OCI-LY7 (cell line): ENCODE measurements at regions of chr17 and their contacts with region 1.

Region 1: DNA sequence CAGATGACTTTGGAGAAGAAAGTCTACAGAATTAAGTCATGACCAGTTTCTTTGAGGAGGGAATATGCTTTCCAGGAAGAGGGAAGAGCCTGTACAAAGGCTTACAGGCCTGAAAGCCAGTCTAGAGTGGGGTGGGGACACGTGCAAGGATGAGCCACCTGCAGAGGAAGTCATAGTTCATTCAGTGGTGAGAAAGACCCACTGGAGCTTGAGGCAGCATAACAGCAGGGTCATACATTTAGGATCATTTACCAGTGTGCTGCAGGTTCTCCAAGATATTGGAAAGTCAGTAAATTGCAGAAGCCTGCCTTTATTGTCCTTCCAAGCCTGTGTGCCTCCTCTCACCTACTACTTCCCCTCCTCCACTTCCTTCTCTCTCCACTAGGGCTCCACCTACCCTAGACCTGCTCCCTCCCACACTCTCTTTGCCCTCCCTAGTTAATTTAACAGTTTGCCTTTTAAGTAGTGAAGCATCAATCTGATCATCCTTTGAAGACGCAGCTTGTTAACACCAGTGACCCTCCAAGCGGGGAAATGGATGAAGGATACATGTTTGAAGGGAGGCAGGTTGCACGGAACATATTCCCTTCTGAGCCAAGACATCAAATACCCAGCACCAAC is 40.2 kb downstream of the CDRT15 start:
- DNase-seq: peak; percentile 68
- H3K4me3 ChIP-seq: no peak overlapping the region
- H3K27ac ChIP-seq: no peak overlapping the region
- H3K4me1 ChIP-seq: peaks cover 43% of the 10 kb centered on the region
- CTCF ChIP-seq: peak; percentile 65

Region 2: DNA sequence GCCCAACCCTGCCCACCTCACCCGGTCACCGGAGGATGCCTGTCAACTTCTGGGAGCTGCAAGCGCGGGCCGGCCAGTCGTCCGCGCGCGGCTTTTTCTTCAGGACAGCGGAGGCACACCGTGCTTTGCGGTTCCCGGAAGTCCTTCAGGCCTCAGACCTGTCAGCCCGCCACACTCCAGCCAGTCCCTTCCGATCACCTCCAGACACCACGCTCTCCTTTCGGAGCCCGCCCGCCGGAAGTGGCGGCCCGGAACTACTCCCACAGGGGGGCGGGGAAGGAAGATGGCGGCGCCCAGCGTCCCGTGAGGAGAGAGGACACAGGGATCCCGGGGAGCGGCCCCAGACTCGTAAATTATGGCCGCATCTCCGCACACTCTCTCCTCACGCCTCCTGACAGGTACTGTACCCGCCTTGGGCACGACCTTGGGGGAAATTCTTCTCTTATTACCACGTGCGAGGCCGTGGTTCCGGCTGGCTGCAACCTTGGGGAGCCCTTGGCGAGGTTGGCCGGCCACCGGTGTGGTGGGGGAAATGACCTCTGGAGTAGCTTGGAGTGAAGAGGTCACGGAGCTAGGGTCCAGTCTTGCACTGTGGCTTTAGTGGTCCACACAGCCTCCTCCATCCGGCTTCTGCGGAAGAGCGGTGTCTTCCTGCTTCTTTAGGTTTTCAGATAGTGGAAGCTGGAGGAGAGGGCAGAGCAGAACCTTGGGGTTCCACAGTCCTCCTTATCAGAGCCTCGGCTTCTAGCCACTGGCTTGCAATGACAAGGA is 127.1 kb before region 1 on chr17 and contains the start of gene COX10:
- CTCF ChIA-PET with region 1: no interaction called
- POLR2A ChIA-PET with region 1: no interaction called
- intact Hi-C with region 1: loop called (anchors 5 kb)
- DNase-seq: peak; percentile 90
- H3K4me3 ChIP-seq: peak within 1 kb of the TSS; percentile 99
- H3K27ac ChIP-seq: peak within 1 kb of the TSS; percentile 55
- H3K4me1 ChIP-seq: peaks cover 21% of the 10 kb centered on the region
- CTCF ChIP-seq: no peak
- total RNA-seq, gene COX10: 21.1 and 28.4 TPM in 2 replicates

Region 3: GRCh38 chr17:14337596-14338079 is 141.2 kb after region 1 on chr17:
- CTCF ChIA-PET with region 1: no interaction called
- POLR2A ChIA-PET with region 1: no interaction called
- intact Hi-C with region 1: no loop called
- DNase-seq: no peak
- H3K4me3 ChIP-seq: no peak overlapping the region
- H3K27ac ChIP-seq: no peak overlapping the region
- H3K4me1 ChIP-seq: peaks cover 15% of the 10 kb centered on the region
- CTCF ChIP-seq: no peak